ENCODE measurements at regions of chr5 and their contacts with region 1.

Region 1: DNA sequence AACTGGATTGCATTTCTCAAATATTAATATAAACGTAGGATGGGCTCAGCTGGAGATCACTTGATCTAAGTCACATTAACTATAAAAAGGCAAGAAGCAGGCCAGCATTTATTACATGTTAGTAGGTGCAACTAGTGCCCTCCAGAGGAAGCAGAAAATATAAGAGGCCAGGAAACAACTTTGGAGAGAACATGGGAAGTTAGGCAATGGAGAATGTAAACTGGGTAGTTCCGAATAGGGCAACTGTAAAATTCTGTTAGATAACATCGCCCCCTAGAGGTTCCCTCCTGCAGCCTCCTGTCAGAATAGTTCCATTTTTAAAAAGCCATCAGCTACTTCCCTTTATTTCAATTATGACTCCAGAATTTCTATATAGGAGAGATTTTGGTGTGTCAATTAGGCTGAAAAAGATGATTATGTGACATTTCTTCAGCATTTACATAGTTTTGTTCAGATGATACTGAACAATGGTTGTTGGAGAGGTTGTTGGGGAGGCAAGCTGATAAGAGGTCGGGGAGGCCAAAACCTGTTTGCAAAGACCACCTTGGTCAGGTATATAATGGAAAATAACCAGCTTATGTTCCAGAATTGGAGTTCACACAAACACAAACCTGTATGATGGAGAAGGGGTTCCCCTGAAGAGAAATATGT is 22.4 kb downstream of the CCL28 start:
- DNase-seq: peak; percentile 68
- CTCF ChIP-seq: peak; percentile 58

Region 2: DNA sequence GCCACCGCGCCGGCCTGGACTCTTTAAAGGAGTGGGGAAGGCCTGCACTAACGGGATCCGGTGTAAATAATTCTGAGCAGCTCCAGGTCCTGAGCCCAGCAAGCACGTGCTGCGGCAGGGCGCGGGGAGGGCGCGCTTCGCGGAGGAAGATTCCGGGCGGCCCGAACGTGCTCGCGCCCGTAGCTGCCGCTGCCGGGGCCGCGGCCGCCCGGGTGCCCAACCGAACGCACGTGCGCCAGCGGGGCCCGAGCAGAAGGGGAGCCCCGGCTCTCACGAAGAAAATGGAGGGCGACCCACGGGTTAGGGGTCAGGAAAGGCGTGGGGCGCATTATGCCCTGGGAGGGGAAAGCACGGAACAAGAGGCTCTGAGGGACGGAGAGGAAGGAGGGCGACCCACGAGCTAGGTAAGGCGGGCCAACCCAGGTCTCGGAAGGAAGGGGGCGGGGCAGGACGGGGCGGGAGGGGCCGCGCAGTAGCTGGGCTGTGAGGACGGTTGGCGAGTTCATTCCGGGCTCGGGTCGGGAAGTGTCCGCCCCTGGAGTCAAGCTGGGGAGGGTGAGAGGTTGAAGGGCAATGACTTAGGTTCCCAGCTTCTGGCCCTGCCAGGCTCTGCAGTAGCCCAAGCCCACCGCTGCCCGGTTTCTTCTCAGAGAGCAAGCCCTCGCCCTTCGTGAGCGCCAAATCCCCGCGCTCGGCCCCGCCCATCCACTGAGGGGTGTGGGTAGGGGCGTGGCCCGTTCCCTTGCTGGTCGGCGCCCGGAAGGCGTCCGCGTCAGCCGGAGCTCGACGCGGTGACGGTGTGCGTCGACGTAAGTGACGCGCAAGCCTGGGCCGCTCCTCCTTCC is 268.9 kb before region 1 on chr5 and contains the start of gene ZNF131:
- CTCF ChIA-PET with region 1: interaction called, 16 read pairs
- POLR2A ChIA-PET with region 1: no interaction called
- DNase-seq: peak; percentile 96
- CTCF ChIP-seq: no peak

Region 3: GRCh38 chr5:43225649-43226245 is 164.1 kb before region 1 on chr5:
- CTCF ChIA-PET with region 1: interaction called, 18 read pairs
- POLR2A ChIA-PET with region 1: no interaction called
- DNase-seq: no peak
- CTCF ChIP-seq: no peak

Region 4: DNA sequence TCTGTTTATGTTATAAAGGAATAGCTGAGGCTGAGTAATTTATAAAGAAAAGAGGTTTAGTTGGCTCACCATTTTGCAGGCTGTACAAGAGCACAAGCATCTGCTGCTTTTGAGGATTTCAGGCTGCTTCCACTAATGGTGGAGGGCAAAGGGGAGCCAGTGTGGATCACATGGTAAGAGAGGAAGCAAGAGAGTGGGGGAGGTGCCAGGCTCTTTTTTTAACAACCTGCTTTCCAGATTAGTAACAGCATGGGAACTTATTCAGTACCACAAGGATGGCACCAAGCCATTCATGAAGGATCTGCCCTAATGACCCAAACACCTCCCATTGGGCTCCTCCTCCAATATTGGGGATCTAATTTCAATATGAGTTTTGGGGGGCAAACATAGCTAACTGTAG is 18.0 kb before region 1 on chr5:
- CTCF ChIA-PET with region 1: interaction called, 24 read pairs
- POLR2A ChIA-PET with region 1: no interaction called
- DNase-seq: no peak
- CTCF ChIP-seq: no peak

Region 5: DNA sequence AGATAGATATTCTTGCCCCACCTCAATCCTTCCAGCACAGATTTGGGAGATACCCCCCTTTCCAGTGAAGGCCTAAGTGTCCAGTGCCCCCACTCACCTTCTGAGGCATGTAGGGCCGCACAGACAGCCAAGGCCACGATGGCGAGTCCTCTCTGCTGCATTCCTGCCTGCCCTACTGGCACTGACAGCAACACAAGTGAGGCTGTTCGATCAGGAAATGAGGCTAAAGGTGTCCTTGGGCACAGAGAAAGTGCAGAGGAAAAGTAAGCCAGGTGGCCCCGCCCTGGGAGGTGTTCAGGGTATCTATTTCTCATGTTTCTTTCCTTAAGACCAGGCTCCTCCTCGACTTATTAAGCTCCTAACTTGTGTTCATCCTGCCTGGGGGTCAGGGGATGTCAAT is 22.4 kb after region 1 on chr5 and contains the start of gene CCL28:
- CTCF ChIA-PET with region 1: interaction called, 10 read pairs
- POLR2A ChIA-PET with region 1: no interaction called
- DNase-seq: no peak
- CTCF ChIP-seq: no peak

Region 6: DNA sequence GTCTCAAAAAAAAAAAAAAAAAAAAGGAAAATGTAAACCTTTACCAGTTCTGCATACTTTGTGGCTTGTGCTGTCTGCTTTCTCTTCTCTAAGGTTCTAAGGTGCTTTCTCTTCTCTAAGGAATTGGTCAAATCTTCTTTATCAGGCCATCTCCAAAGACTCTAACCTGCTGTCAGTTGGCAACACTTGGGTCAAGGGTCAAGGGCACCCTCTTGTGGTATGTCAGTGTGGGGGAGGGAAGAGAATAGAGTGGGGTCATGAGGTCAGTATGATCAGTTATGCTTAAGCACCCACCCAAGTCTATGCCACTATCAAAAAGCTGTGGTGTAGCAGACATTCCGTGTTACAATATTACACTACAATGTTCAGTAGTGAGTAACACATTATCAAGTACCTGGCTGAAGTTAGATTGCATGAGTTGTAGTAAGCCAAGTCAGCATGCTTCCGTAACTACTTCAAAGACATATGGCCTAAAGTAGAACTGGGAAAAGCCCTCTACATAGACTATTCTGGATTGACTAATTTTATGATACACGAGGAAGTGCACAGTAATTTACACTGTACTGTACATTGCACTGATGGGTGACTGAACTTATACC is 47.4 kb after region 1 on chr5:
- CTCF ChIA-PET with region 1: no interaction called
- POLR2A ChIA-PET with region 1: no interaction called
- DNase-seq: no peak
- CTCF ChIP-seq: no peak

Measured in GM10248 (cell line).